Dorsolateral prefrontal cortex (tissue), 120 donors: ENCODE measurements at regions of chr3 and their contacts with region 1.

Region 1: DNA sequence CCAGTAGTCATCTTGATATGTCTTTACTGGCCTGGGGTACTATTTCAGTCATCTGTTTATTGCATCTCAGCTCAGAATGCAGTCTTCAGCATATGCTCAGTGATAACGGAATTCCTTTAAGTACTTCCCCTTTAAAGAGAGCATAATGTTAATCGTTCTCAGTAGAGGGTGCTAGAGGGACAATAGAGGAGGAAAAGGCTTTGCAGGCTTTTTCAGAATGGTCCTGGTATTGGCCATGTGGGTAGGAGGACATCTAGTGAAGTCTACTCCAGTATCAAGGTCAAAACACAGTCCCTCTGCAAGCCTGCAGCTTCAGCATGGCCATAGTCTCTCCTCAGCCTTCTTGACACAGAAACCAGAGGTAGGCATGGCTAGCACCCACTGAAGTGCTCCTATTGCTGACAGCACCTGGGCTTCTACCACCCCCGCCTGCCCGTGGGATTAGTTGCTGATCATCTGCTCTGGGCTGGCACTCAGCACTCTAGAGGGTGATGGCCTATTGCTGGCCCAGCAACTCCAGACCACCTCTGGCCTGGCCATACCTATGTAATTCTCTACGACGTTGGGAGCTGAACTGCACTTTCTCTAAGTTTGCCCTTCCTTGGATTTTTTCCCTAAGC is 65.4 kb downstream of the KCNH8 start:
- DNase-seq: no peak
- H3K4me3 ChIP-seq: no peak overlapping the region
- H3K27ac ChIP-seq: peak overlapping the region in 21 of 59 donors; percentile 1 to 78 (median 33)
- H3K27me3 ChIP-seq: no peaks in the 10 kb centered on the region
- CTCF ChIP-seq: peak in 53 of 56 donors; percentile 25 to 79 (median 50)

Region 2: GRCh38 chr3:19543212-19543841 is 329.6 kb after region 1 on chr3:
- intact Hi-C with region 1: loop called in 1 of 2 experiments (anchors 10 kb)
- DNase-seq: no peak
- H3K4me3 ChIP-seq: no peak overlapping the region
- H3K27ac ChIP-seq: no peak overlapping the region
- H3K27me3 ChIP-seq: no peaks in the 10 kb centered on the region
- CTCF ChIP-seq: peak in 54 of 56 donors; percentile 31 to 81 (median 62)

Region 3: DNA sequence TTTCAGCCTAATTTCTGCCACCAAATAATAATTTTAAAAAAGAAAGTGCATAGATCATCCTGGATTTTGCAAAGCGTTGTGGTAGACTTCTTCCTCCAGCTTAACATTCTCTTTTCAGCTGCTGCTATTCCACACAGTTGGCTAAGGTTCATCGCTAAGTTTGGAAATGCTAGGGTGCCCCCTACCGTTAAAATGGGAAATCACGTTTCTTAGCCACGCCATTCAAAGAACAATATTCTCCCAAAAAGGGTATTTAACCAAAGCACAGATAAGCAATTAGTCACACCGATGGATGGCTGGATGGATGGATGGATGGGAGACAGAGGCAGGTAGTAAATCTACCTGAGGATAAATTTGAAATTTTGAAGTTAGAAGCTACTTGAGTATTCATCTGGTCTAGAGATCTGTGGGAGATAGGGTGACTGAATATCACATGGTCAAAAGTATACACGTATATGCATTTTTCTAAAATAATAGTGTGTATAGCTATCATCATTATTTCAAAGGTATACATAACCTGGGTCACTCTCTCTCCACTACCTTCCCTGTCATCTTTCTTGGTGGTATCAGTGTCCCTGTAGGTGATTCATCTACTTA is 653.1 kb after region 1 on chr3:
- intact Hi-C with region 1: loop called (anchors 10 kb)
- DNase-seq: peak in 4 of 10 donors; percentile 36 to 67 (median 56)
- H3K4me3 ChIP-seq: peak overlapping the region in 3 of 59 donors; percentile 11 to 31 (median 17)
- H3K27ac ChIP-seq: no peak overlapping the region
- H3K27me3 ChIP-seq: no peaks in the 10 kb centered on the region
- CTCF ChIP-seq: peak; percentile 64 to 92 (median 84)